Gastrocnemius medialis (tissue), 4 donors: ENCODE measurements at regions of chr5 and their contacts with region 1.

Region 1: GRCh38 chr5:132820162-132820754 is 7.2 kb downstream of the SOWAHA start:
- DNase-seq: peak; percentile 65 to 78
- ATAC-seq: peak; percentile 76 to 92
- H3K4me3 ChIP-seq: no peak overlapping the region
- H3K27ac ChIP-seq: no peak overlapping the region
- H3K4me1 ChIP-seq: peaks cover 0 to 3% of the 10 kb centered on the region in 2 donors
- H3K27me3 ChIP-seq: no peaks in the 10 kb centered on the region
- CTCF ChIP-seq: peak; percentile 66 to 89 (median 82)
- POLR2A ChIP-seq: no peak

Region 2: DNA sequence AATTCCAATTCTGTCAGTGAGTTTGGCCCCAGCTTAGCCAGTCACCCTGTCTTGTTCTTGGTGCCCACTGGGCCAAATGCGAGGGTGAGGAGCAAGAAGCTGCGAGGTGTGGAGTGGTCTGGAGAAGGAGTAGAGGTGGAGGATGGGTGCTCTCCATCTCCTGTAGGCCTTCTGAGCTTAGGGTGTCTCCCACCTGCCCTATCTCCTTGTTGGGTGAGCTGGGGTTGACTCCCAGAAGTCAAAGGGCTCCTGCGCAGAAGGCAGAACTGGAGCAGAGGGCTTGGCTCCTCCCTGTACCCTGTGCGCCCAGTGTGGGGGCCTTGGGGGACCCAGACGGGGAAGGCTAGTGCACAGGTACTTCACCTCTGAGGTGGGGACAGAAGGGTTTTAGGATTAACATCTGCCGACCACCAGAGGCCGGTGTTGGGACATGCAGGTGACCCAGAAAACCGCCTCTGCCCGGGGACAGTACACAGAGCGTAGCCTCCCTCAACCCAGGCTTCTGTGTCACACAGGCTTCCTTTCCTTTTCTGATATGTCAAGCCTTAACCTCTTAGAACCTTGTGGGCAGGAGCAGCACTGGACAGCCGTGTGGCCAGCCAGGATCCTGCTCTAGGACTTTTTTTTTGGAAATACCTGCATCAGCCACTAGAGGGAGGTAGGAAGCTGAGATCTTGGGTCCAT is 293.8 kb before region 1 on chr5:
- in situ Hi-C with region 1: loop called in 2 of 4 experiments (anchors 25 kb)
- intact Hi-C with region 1: no loop called
- DNase-seq: peak in 1 of 2 donors; percentile 17
- ATAC-seq: peak in 1 of 2 donors; percentile 80
- H3K4me3 ChIP-seq: no peak overlapping the region
- H3K27ac ChIP-seq: no peak overlapping the region
- H3K4me1 ChIP-seq: no peaks in the 10 kb centered on the region
- H3K27me3 ChIP-seq: no peaks in the 10 kb centered on the region
- CTCF ChIP-seq: peak; percentile 60 to 81 (median 69)
- POLR2A ChIP-seq: no peak

Region 3: DNA sequence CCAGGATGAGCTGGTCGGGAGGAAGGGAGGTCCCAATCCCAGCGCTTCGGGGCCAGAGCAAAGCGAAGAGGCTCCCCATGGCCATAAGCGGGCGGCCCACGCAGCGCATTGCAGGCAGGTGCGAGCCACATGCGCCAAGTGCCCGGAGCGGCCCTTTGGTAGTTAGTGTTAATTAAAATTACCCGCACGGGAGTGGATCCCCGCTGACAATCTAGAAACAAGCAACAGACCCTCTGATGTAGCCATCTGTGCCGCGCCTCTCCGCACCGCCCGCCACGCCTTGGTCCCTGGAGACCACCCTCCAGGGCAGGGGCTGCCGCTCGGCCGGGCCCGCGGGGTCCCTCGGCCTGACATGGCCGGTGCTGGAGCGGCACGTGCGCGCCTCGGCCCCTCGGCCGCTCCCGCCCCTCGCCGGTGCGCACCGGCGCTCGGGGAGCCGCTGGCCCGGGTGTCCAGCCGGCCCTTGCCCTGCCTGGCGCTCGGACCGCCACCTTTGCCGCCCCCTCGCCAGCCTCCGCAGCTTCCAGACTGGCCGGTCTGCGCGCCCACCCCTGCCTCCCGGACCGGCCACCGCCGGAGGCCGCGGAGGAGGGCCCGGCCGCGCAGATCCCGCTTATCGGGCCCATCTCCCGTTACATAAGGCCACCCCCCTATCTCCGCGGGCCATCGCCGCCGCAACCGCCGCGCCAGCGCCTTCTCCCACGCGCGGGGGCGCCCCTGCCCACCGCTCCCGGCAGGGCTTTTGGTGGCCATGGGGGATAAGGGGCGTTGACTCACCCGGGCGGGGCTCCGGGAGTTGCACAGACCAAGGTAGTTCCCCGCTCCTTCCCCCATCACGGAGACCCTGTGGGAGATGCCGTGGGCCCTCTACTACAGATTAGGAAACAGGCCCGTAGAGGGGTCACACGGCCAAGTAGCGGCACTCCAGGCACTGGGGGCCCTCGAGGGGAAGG is 164.2 kb before region 1 on chr5:
- in situ Hi-C with region 1: no loop called
- intact Hi-C with region 1: loop called (anchors 5 kb)
- DNase-seq: no peak
- ATAC-seq: no peak
- H3K4me3 ChIP-seq: peak overlapping the region; percentile 32 to 47 (median 38)
- H3K27ac ChIP-seq: no peak overlapping the region
- H3K4me1 ChIP-seq: peaks cover 0 to 10% of the 10 kb centered on the region in 2 donors
- H3K27me3 ChIP-seq: peaks cover 21 to 35% (median 27%) of the 10 kb centered on the region in 3 donors
- CTCF ChIP-seq: no peak
- POLR2A ChIP-seq: no peak

Region 4: GRCh38 chr5:132677191-132677590 is 143.1 kb before region 1 on chr5:
- in situ Hi-C with region 1: no loop called
- intact Hi-C with region 1: no loop called
- DNase-seq: no peak
- ATAC-seq: no peak
- H3K4me3 ChIP-seq: no peak overlapping the region
- H3K27ac ChIP-seq: no peak overlapping the region
- H3K4me1 ChIP-seq: no peaks in the 10 kb centered on the region
- H3K27me3 ChIP-seq: no peaks in the 10 kb centered on the region
- CTCF ChIP-seq: no peak
- POLR2A ChIP-seq: no peak

Region 5: GRCh38 chr5:132736853-132737833 is 83.1 kb before region 1 on chr5 and contains the start of gene KIF3A:
- in situ Hi-C with region 1: loop called in 1 of 4 experiments (anchors 10 kb)
- intact Hi-C with region 1: loop called (anchors 5 kb)
- DNase-seq: peak; percentile 88 to 93
- ATAC-seq: peak; percentile 99
- H3K4me3 ChIP-seq: peak within 1 kb of the TSS; percentile 74 to 89 (median 86)
- H3K27ac ChIP-seq: peak within 1 kb of the TSS; percentile 57 to 65 (median 58)
- H3K4me1 ChIP-seq: peaks cover 5 to 7% of the 10 kb centered on the region in 2 donors
- H3K27me3 ChIP-seq: peaks cover 0 to under 1% (median 0%) of the 10 kb centered on the region in 3 donors
- CTCF ChIP-seq: peak in 2 of 5 experiments; percentile 38 to 40
- POLR2A ChIP-seq: no peak
- total RNA-seq, gene KIF3A: 2.5 to 4.2 (median 3.4) TPM

Region 6: DNA sequence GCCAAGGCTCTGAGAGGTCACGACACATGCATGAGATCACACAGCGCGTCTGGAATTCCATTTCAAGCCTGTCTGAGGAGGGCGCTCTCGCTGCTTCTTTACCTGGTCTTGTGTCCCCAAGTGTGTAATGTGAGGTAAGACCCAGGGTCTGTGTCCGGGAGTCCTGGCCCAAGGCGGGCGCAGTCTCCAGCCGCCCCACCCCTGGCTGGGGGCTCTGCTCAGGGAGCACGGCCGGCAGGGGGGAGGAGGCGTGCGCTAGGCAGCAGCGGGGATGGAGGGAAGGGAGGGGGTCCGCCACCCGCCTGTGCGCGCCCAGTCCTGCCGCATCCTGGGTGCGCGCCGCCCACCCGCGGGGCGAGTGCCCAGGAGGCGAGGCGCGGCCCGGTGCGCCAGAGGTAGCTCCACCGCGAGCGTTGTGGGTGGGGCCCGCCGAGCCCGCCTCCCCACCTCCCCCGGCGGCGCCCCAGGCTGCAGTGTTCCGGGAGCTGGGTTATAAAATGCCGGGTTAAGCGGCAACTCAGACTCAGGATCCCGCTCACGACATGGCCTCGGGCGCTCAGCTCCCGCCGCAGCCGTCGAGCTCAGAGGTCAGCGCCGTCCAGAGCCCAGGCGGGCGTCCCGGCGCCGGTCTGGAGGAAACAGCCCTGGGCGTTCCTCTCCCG is 73.2 kb before region 1 on chr5 and contains the start of gene CCNI2:
- in situ Hi-C with region 1: loop called in 1 of 4 experiments (anchors 10 kb)
- intact Hi-C with region 1: loop called (anchors 2 kb)
- DNase-seq: no peak
- ATAC-seq: peak in 1 of 2 donors; percentile 18
- H3K4me3 ChIP-seq: peak within 1 kb of the TSS; percentile 24 to 43 (median 36)
- H3K27ac ChIP-seq: no peak within 1 kb of the TSS
- H3K4me1 ChIP-seq: peaks cover 0 to 2% of the 10 kb centered on the region in 2 donors
- H3K27me3 ChIP-seq: peaks cover 27 to 37% (median 37%) of the 10 kb centered on the region in 3 donors
- CTCF ChIP-seq: no peak
- POLR2A ChIP-seq: no peak
- total RNA-seq, gene CCNI2: not detected